Sigmoid colon (tissue), 7 donors: ENCODE measurements at regions of chr18 and their contacts with region 1.

Region 1: DNA sequence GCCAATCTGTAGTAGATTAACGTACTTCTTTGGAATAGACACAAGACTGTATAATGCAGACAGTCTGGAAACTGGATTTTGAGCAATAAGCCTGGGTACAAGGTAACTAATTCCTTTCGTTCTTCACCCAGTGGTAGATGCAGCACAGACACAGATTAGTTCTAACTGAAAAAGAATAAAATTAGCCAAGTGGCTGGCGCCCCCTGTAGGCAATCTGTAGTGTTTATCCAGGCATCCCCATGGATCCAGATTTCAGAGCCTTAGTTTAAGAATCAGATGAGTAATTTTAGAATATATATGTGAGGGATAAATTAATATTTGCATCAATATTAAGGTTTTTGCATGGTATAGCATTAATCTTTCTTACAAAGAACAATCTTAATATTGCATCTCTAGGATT is 563.9 kb downstream of the DCC start:
- DNase-seq: no peak
- H3K4me3 ChIP-seq: no peak overlapping the region
- H3K27ac ChIP-seq: no peak overlapping the region
- H3K4me1 ChIP-seq: peaks cover 0 to 14% (median 2%) of the 10 kb centered on the region in 4 donors
- H3K27me3 ChIP-seq: no peaks in the 10 kb centered on the region
- CTCF ChIP-seq: peak; percentile 35 to 61 (median 48)
- EP300 ChIP-seq: no peak
- POLR2A ChIP-seq: no peak

Region 2: DNA sequence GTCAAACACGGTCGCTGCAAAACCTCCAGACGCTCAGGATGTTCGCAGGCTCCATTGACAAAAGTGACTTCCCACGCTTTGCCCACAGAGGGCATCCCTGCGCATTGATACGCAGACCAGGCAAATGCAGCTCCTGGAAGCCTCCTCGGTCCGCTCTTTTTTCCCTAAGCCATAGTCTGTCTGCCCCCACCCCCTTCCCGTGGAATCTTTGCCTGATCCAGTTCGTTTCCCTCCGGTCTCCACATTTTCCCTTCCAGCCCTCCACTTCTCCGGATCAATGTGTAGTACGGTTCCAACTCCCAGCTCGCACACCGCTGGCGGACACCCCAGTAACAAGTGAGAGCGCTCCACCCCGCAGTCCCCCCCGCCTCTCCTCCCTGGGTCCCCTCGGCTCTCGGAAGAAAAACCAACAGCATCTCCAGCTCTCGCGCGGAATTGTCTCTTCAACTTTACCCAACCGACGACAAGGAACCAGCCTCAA is 563.9 kb before region 1 on chr18 and contains the start of gene DCC:
- intact Hi-C with region 1: loop called (anchors 5 kb)
- DNase-seq: no peak
- H3K4me3 ChIP-seq: peak within 1 kb of the TSS; percentile 19 to 44 (median 42)
- H3K27ac ChIP-seq: no peak within 1 kb of the TSS
- H3K4me1 ChIP-seq: peaks cover 0 to 29% (median 19%) of the 10 kb centered on the region in 4 donors
- H3K27me3 ChIP-seq: peaks cover 0 to 63% (median 24%) of the 10 kb centered on the region in 3 donors
- CTCF ChIP-seq: peak; percentile 16 to 47 (median 30)
- EP300 ChIP-seq: no peak
- POLR2A ChIP-seq: no peak
- total RNA-seq, gene DCC: 0.16 to 0.83 (median 0.59) TPM

Region 3: DNA sequence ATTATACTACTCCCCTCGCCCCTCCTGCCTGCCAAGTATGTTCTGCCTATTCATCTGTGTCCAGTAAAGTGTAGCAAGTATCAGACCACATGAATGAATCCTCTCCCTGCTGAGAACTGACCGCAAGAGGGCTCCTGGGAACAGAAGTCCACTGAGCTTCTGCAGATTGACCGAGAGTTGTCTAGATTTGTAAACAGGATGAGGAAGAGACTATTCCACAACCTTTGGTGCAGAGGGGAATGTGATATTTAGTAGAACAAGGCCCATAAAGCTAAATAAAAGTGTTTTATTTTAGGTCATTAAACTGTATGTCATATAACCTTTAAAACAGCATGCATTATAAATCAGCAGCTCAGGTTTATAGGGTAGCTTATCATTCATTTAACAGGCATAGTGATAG is 186.9 kb before region 1 on chr18:
- intact Hi-C with region 1: loop called (anchors 2 kb)
- DNase-seq: no peak
- H3K4me3 ChIP-seq: no peak overlapping the region
- H3K27ac ChIP-seq: no peak overlapping the region
- H3K4me1 ChIP-seq: no peaks in the 10 kb centered on the region
- H3K27me3 ChIP-seq: no peaks in the 10 kb centered on the region
- CTCF ChIP-seq: peak; percentile 7 to 57 (median 35)
- EP300 ChIP-seq: no peak
- POLR2A ChIP-seq: no peak